ENCODE measurements at regions of chrX and their contacts with region 1.

Region 1: DNA sequence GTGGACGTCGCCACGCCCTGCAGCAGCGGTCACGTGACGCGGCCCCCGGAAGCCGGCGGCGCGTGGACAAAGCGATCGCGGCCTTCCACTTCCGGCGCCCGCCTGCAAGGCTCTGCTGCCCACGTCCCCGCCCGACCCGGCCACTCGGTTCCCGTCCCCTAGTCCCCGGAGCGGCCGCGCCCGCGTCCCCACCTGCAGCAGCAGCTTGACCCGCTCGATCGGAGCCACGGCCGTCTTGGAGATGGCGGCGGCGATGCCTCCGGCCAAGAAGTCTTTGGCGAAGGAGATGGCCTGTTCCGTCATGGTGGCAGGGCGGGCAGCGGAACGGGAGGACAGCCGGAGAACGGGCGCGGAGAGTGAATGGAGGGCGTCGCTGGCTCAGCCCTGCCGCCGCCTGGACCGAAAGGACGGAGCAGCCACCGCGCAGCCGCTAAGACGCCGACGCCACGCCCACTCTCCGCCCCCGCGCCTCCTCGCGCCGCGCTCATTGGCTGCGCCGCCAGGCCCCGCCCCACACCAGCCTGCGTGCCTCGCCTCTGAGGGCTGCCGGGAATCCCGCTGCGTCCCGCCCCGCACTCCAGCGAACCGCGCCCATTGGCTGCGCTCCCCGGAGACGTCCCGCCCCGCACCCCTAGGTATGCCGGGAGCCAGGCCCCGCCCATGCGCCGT is at the start of gene SLC25A6:
- DNase-seq: peak; percentile 100
- ATAC-seq: peak; percentile 98
- H3K4me3 Mint-ChIP-seq: peak within 1 kb of the TSS; percentile 82
- H3K27ac Mint-ChIP-seq: peak within 1 kb of the TSS; percentile 92
- H3K4me1 Mint-ChIP-seq: peaks cover 58% of the 10 kb centered on the region
- H3K27me3 Mint-ChIP-seq: no peaks in the 10 kb centered on the region
- total RNA-seq, gene SLC25A6: 396 to 456 TPM

Region 2: DNA sequence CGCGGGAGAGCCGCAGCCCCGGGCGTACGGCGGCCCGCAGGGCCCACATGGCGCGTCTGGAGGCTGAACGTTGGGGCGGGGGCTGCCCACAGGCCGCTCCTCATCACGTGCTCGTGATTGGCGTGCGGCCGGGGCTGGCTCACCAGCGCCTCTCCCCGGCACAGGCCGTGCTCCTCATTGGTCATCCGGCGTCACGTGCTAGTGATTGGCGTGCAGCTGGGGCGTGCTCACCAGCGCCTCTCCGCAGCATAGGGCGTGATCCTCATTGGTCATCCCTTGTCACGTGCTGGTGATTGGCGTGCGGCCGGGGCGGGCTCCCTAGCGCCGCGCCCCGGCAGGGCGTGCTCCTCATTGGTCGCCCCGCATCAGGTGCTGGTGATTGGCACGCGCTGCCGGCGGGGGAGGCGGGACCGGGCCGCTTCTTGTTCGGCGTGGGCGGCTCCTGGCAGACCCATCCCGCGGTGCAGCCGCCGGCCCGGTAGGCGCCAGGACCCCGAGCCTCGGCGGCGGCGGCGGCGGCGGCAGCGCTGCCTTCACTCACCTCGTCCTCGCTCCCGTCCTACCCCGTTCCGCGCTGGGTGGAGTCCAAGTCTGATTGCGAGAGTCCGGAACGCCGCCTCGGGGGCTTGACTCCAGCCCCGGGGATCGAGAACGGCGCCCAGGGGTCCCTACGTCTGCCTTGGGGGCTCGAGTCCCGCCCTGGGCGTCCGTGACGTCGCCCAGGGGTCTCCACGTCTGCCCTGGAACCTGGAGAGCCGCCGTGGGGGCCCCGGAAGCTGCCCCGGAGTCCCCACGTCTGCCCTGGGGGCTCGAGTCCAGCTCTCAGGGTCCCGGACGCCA is 1072.9 kb before region 1 on chrX and contains the start of gene GTPBP6:
- CTCF ChIA-PET with region 1: no interaction called
- POLR2A ChIA-PET with region 1: no interaction called
- intact Hi-C with region 1: loop called in 1 of 2 experiments (anchors 1 kb)
- DNase-seq: peak; percentile 99
- ATAC-seq: peak; percentile 78
- H3K4me3 Mint-ChIP-seq: peak within 1 kb of the TSS; percentile 88
- H3K27ac Mint-ChIP-seq: peak within 1 kb of the TSS; percentile 99
- H3K4me1 Mint-ChIP-seq: peaks cover 23% of the 10 kb centered on the region
- H3K27me3 Mint-ChIP-seq: no peaks in the 10 kb centered on the region
- total RNA-seq, gene GTPBP6: 54.5 to 60.2 TPM

Region 3: GRCh38 chrX:1205680-1206611 is 185.9 kb before region 1 on chrX:
- CTCF ChIA-PET with region 1: no interaction called
- POLR2A ChIA-PET with region 1: no interaction called
- intact Hi-C with region 1: loop called in 1 of 2 experiments (anchors 2 kb)
- DNase-seq: peak; percentile 46
- ATAC-seq: peak; percentile 53
- H3K4me3 Mint-ChIP-seq: peak overlapping the region; percentile 67
- H3K27ac Mint-ChIP-seq: peak overlapping the region; percentile 42
- H3K4me1 Mint-ChIP-seq: peaks cover 29% of the 10 kb centered on the region
- H3K27me3 Mint-ChIP-seq: peaks cover 4% of the 10 kb centered on the region

Region 4: DNA sequence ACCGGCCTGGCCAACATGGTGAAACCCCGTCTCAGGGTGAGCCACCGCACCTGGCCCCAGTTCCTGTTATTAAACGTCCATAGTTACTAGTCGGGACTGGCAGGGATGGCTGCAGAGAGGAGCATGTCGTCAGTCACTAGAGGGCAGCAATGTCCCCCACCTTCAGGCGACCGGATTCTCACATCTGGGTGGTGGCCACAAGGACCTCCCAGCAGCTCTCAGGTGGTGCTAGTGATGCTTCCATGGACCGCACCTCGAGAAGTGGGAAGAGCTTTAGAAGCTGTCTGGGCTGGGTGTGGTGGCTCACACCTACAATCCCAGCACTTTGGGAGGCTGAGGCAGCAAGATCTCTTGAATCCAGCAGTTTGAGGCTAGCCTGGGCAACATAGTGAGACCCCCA is 68.5 kb before region 1 on chrX:
- CTCF ChIA-PET with region 1: no interaction called
- POLR2A ChIA-PET with region 1: no interaction called
- intact Hi-C with region 1: loop called in 1 of 2 experiments (anchors 2 kb)
- DNase-seq: peak; percentile 78
- ATAC-seq: peak; percentile 78
- H3K4me3 Mint-ChIP-seq: no peak overlapping the region
- H3K27ac Mint-ChIP-seq: peak overlapping the region; percentile 51
- H3K4me1 Mint-ChIP-seq: peaks cover 18% of the 10 kb centered on the region
- H3K27me3 Mint-ChIP-seq: peaks cover 8% of the 10 kb centered on the region

Region 5: DNA sequence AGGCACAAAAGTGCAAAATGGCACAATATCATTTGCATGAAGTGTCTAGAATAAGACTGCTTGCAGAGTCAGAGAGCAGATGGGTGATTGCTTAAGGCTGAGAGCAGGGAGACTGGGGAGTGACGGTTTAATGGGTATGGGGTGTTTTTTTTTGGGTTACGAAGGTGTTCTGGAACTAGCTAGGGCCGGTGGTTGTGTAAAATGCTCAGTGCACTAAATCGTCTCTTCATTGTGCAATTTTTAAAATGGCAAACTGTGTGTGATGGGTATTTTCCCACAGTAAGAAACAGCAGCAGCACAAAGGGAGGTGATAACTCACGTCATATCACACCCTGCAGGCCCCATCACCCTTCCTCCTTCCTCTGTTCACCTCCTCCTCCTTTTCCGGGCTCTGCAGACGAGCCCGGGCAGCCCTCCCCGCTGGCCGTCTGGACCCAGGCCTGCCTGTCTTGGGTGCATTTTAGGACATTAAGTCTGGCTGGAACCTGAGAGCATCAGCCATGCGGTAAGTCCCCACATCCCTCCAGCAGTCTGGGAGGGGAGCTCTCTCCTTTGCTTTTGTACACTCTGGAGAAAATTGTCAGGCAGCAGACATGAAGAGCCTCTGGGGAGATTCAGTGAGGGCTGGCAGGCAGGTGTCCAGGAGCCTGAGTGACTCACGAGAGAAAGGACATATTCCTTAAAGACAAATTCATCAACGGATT is 265.7 kb after region 1 on chrX:
- CTCF ChIA-PET with region 1: no interaction called
- POLR2A ChIA-PET with region 1: no interaction called
- intact Hi-C with region 1: loop called in 1 of 2 experiments (anchors 1 kb)
- DNase-seq: peak; percentile 80
- ATAC-seq: peak; percentile 67
- H3K4me3 Mint-ChIP-seq: peak overlapping the region; percentile 93
- H3K27ac Mint-ChIP-seq: peak overlapping the region; percentile 98
- H3K4me1 Mint-ChIP-seq: peaks cover 23% of the 10 kb centered on the region
- H3K27me3 Mint-ChIP-seq: no peaks in the 10 kb centered on the region

Region 6: GRCh38 chrX:2690856-2691542 is 1299.2 kb after region 1 on chrX and contains the start of gene CD99:
- CTCF ChIA-PET with region 1: no interaction called
- POLR2A ChIA-PET with region 1: no interaction called
- intact Hi-C with region 1: loop called in 1 of 2 experiments (anchors 5 kb)
- DNase-seq: peak; percentile 91
- ATAC-seq: peak; percentile 79
- H3K4me3 Mint-ChIP-seq: peak within 1 kb of the TSS; percentile 95
- H3K27ac Mint-ChIP-seq: peak within 1 kb of the TSS; percentile 100
- H3K4me1 Mint-ChIP-seq: peaks cover 34% of the 10 kb centered on the region
- H3K27me3 Mint-ChIP-seq: no peaks in the 10 kb centered on the region
- total RNA-seq, gene CD99: 169 to 216 TPM